Astrocyte of the cerebellum (primary cell): ENCODE measurements at regions of chr16 and their contacts with region 1.

Region 1: GRCh38 chr16:66660422-66661209 is 35.9 kb downstream of the CMTM4 start:
- DNase-seq: peak; percentile 57
- H3K4me3 ChIP-seq: no peak overlapping the region
- CTCF ChIP-seq: peak; percentile 46

Region 2: GRCh38 chr16:66326991-66327513 is 333.6 kb before region 1 on chr16:
- in situ Hi-C with region 1: no loop called
- DNase-seq: no peak
- H3K4me3 ChIP-seq: no peak overlapping the region
- CTCF ChIP-seq: no peak

Region 3: DNA sequence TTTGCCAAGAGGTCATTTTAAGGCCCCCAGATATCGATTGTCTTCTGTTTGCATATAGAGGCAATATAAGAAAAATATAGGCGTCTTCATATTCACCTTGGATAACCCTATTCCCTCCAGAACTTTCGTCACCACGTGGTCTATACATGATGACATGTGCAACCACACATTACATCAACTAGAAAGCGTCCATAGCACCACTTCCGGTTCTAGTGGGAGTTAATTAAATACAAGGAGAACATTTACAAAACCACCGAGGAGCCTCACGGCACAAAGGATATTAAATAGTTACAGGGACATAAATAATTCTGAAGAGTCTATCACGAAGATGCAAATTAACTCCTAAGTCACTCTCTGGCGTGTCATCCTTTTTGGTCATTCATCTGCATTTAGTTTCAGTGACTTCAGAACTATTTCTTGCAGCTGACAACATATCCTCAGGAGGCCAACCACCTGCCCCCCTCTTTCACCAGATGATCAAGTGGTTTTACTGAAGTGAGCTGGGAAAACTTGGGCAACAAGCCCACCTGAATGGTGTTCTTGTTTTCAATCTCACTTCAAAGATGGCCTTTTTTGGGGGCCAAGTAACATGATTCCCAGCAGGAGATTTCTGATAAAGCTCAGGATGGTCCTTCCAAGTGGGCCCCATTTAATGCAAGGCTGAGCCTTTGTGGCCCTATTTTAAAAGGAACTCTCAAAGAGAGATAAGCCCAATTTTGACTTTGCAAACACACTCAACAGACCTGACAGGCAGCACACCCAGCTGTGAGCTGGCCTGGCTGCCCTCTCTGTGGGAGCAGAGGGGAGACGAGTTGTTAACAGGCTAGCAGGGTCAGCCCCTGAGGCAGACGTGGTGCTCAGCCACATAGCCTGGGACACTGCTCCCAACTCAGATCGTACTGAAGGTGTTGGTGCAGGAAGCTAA is 40.8 kb before region 1 on chr16:
- in situ Hi-C with region 1: loop called (anchors 5 kb)
- DNase-seq: peak; percentile 77
- H3K4me3 ChIP-seq: no peak overlapping the region
- CTCF ChIP-seq: no peak

Region 4: GRCh38 chr16:66705790-66706505 is 45.3 kb after region 1 on chr16:
- in situ Hi-C with region 1: no loop called
- DNase-seq: no peak
- H3K4me3 ChIP-seq: no peak overlapping the region
- CTCF ChIP-seq: no peak

Region 5: GRCh38 chr16:66717112-66717675 is 56.6 kb after region 1 on chr16:
- in situ Hi-C with region 1: no loop called
- DNase-seq: peak; percentile 22
- H3K4me3 ChIP-seq: no peak overlapping the region
- CTCF ChIP-seq: peak; percentile 64

Region 6: DNA sequence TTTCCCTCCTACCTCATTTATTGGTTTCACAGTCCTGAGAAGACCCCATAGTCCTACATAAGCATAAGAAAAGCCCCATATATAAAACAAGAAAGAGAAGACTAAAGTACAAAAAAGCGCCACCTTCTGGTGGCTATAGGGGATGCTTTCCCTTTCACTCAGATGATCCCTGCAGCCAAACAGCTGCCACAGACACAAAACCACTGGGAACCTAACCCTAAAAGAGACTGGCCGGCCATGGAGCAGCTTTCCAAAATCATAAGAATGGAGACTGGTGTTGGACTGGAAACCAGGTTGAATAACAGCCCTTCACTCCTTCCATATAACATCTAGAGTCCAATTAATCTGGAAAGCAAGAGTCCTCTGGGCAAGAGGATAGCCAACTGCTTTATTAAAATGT is 79.4 kb after region 1 on chr16:
- in situ Hi-C with region 1: loop called (anchors 5 kb)
- DNase-seq: no peak
- H3K4me3 ChIP-seq: no peak overlapping the region
- CTCF ChIP-seq: peak; percentile 65